Head of caudate nucleus (tissue), 42 donors: ENCODE measurements at regions of chr12 and their contacts with region 1.

Region 1: DNA sequence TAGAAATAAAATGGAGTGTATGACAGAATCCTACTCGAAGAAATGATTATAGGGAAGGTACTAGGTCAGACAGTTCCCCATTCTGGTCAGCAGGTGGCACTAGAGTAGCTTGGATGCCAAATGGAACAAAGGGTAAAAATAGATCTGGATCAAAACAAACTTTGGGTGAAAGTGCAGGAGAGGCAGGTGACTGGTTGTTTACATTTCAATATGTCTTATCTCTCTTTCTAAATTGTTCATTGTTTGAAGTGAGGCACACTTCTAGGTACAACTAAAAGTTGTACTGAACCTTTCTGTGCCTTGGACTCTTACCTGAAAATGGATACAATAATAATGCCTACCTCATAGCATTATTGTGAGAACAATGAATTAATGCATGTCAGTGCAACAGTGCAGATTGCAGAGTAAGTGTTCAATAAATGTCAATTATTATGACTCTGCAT is 62.0 kb upstream of the OSBPL8 start:
- DNase-seq: peak; percentile 40 to 91 (median 76)

Region 2: GRCh38 chr12:76790564-76791552 is 169.3 kb after region 1 on chr12:
- intact Hi-C with region 1: loop called (anchors 5 kb)
- DNase-seq: no peak

Region 3: DNA sequence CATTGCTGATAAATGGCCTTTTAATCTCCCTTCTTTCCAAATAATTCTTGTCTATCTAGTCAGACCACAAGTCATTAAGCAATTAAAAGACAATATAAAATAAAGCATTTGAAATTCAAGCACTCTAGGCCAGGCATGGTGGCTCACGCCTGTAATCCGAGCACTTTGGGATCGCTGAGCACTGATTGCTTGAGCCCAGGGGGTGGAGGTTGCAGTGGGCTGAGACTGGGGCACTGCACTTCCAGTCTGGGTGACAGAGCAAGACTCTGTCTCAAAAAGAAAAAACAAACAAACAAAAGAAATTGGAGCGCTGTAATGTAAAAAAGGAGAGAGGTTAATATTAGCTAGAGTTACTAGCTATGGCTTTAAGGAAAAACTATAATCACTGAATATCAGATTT is 287.7 kb after region 1 on chr12:
- intact Hi-C with region 1: no loop called
- DNase-seq: no peak

Region 4: GRCh38 chr12:77010691-77011548 is 389.3 kb after region 1 on chr12:
- intact Hi-C with region 1: loop called (anchors 5 kb)
- DNase-seq: peak; percentile 68 to 90 (median 82)